Sciatic nerve (tissue), 2 donors: ENCODE measurements at regions of chr12 and their contacts with region 1.

Region 1: DNA sequence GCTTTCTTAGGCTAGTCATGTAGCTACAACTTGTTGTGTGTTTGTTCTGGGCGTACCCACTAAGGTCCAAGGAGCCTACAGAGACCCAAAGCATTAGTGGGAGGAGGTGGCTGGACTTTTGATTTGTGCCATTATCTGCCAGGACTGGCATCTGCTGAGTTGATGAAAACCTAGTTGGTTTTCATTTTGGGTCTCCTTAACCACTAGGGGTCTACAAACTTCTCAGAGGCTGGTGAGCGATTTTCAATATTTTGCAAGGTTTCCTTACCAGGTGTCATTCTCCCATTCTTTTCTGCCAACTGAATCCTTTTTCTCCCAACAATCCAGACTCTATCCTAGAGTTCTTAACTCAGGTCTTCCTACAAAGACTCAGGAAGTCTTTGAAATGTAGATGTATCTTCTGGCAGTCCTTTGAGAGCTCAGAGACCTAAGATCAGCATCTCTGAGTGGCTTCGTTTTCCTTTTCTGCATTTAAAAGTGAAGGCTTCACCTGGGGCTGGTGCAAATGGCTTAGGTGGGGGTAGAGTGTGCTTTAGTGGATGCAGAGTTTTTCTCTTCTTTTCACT is 150.0 kb upstream of the RMST start:
- DNase-seq: no peak
- ATAC-seq: no peak

Region 2: GRCh38 chr12:96985480-96986362 is 326.9 kb before region 1 on chr12:
- intact Hi-C with region 1: loop called (anchors 10 kb)
- DNase-seq: no peak
- ATAC-seq: peak; percentile 48

Region 3: DNA sequence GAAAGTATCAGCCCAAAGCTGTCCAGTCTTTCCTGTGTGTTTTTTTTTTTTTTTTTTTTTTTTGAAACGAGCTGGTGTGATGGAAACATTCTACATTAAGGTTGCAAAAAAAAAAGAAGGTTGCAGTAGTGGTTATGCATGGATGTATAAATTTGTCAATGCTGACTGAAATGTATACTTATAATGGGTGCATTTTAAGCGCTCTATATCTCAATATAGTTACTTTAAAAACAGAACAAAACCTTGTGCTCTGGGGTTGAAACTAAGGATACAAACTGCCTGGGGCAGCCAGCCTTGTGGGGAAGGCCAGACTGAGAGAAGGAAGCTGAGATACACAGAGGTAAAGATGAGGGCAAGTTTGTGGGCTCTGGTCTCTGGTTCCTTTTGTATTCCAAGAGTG is 62.7 kb after region 1 on chr12:
- intact Hi-C with region 1: no loop called
- DNase-seq: no peak
- ATAC-seq: no peak